Kidney (tissue), 22 donors: ENCODE measurements at regions of chr4 and their contacts with region 1.

Region 1: DNA sequence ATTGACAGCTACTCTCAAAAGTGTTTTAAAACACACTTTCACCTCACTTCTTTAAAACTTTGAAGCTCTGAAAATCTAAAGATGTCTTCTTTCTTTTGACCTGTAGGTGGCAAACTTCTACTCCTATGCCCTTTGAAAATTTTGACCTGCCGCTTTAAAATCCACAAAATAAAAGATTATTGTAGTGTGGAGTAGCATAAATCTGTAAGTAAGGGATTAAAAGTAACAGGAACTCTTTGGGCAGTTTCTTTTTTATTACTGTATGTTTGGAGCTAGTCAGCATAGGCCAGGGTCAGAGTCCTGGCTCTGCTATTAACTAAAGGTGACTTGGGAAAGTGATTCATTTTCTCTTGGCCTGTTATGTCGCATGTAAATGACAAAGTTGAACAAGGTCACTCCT is 25.5 kb downstream of the BBS12 start:
- DNase-seq: peak in 2 of 5 donors; percentile 51 to 58
- H3K4me3 ChIP-seq: no peak overlapping the region
- H3K27ac ChIP-seq: no peak overlapping the region
- H3K4me1 ChIP-seq: peaks cover 0 to 4% (median 0%) of the 10 kb centered on the region in 3 donors
- H3K27me3 ChIP-seq: no peaks in the 10 kb centered on the region
- CTCF ChIP-seq: peak; percentile 41

Region 2: DNA sequence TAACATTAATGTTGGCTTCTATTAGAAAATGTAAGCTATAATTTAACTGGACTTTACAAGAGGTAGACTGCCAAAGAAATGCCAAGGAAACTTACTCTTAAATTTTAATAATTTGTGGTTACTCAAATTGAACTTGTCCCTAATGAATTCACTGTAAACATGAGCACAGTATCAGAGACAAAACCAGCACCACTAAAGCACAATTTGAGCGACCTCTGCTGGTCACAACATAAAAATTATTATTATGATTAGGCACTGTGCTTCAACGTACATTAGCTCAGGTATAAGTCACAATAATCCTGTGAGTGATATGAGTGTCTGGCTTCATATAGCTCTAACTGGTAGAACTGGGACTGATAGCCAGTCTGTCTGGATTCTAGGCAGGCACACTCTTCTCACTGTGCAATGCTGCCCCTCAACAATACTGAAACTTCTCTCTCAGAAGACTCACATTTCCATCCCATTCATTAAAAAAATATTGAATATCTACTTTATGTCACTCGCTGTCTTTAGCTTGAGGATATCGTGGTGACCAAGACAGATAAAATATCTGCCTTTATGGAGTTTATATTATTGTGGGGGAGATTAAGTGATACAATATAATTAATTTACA is 156.4 kb after region 1 on chr4:
- intact Hi-C with region 1: loop called (anchors 10 kb)
- DNase-seq: peak in 2 of 5 donors; percentile 74 to 75
- H3K4me3 ChIP-seq: no peak overlapping the region
- H3K27ac ChIP-seq: no peak overlapping the region
- H3K4me1 ChIP-seq: no peaks in the 10 kb centered on the region
- H3K27me3 ChIP-seq: no peaks in the 10 kb centered on the region
- CTCF ChIP-seq: peak; percentile 65